ENCODE measurements at regions of chr21 and their contacts with region 1.

Region 1: DNA sequence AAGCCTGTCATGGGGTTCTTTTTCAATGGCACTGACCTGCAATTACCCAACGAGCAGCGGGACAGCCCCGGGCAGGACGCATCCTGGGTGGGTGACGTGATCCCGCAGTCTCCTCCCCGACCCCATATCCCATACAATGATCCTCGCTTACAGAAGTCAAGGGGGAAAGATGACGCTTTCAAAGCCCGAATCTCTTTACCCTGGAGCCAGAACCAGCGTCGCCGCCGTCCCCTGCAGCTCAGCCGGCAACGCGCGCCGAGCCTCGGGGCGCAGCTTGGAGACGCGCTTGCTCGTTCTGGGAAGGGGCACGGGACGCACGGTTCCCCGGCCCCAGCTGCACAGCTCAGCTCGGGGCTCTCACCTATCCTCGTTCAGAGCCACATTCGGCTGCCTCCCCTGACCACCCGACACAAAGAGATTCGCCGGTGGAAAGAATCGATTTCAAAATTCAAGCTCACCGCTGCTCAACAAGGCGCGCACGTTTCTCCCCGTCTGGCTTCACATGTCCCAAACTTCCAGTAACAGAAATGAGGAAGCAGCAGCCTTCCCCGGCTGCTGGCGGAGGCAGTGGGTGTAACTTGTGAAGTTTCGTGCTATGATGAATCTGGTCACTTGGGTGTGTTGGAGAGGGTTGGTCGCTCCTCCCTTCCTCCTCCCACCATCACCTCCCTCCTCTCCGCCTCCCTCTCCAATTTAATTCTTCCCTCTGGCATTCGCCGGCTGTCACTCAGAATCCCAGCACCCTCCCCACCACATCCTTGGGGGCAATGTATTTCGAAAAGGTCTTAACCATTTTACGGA is at the start of gene TIAM1:
- DNase-seq: peak in 9 of 10 donors; percentile 43 to 78 (median 66)
- H3K4me3 ChIP-seq: peak within 1 kb of the TSS; percentile 40 to 82 (median 64)
- H3K27ac ChIP-seq: peak within 1 kb of the TSS in 18 of 59 donors; percentile 7 to 90 (median 35)
- H3K27me3 ChIP-seq: peaks cover 0 to 10% (median 0%) of the 10 kb centered on the region in 45 donors
- CTCF ChIP-seq: peak in 1 of 56 donors; percentile 14
- total RNA-seq, gene TIAM1: 53.4 to 115 (median 79.5) TPM

Region 2: GRCh38 chr21:31107871-31108270 is 236.0 kb before region 1 on chr21:
- intact Hi-C with region 1: loop called in 1 of 2 experiments (anchors 10 kb)
- DNase-seq: no peak
- H3K4me3 ChIP-seq: no peak overlapping the region
- H3K27ac ChIP-seq: peak overlapping the region in 18 of 59 donors; percentile 3 to 74 (median 42)
- H3K27me3 ChIP-seq: no peaks in the 10 kb centered on the region
- CTCF ChIP-seq: no peak

Region 3: DNA sequence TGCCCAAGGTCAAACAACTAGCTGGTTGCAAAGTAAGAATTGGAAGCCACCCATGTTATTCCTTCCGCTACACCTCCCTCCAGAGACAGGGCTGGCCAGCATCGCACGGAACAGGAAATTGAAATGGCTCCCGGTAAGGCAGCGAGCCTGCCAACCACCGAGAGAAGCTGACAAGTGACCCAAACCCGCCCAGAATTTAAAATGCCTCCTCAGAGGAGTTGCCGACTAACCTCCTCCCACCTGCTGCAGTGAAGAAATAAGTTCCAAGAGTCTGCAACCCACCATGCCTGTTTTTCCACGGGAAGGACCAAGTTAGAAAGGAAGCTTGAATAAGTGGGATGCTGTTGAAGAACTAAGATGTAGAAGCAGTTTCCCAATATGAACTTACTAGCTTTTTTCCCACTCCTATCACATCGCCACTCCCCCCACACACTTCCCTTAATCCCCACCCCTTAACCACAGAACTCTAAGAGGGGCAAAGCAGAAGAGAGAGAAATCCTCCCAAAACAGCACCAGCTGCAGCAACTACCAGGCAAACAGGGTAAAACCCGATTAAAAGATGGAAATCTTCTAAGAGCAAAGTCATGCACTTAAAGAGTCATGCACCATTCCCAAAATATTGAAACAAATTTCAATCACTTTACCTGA is 78.4 kb before region 1 on chr21:
- intact Hi-C with region 1: loop called in 1 of 2 experiments (anchors 10 kb)
- DNase-seq: peak in 3 of 10 donors; percentile 46 to 91 (median 53)
- H3K4me3 ChIP-seq: peak overlapping the region in 52 of 59 donors; percentile 4 to 54 (median 36)
- H3K27ac ChIP-seq: peak overlapping the region in 19 of 59 donors; percentile 19 to 81 (median 42)
- H3K27me3 ChIP-seq: no peaks in the 10 kb centered on the region
- CTCF ChIP-seq: no peak

Region 4: DNA sequence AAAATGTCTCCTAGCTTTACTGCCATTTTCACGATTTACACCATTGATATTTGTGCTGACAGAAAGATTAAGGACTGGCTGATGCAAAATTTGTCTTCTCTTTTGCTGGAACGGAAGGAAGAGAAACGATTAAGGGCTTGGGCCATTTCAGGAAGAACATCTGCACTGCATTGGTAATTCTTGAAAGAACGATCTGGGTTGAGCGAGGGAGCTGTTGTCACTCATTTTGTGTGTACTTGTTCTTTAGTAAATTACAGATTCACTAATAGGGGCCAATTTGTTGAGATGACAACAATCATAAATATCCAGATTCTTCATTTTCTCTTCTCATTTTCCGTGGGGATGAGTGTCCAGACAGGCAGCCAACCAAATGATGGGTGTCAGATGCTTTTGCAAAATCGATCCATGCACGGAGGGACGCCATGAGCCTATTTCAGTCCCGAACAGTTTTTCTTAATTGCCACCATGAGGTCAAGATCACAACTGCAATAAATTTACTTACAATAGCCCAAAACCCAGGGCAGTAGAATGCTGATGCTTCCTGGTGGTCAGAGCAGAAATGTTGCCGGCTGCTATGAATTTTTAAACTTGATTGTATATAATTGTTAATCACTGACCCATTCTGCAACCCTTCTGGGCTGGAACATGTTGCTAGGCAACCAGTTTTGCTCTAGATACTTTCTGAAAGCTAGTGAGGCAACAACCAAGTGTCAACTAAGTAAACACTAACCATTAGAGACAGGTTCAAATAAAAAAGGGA is 132.6 kb after region 1 on chr21:
- intact Hi-C with region 1: loop called (anchors 5 to 10 kb)
- DNase-seq: peak in 2 of 10 donors; percentile 20 to 25
- H3K4me3 ChIP-seq: peak overlapping the region in 1 of 59 donors; percentile 10
- H3K27ac ChIP-seq: peak overlapping the region in 52 of 59 donors; percentile 1 to 100 (median 54)
- H3K27me3 ChIP-seq: no peaks in the 10 kb centered on the region
- CTCF ChIP-seq: peak in 31 of 56 donors; percentile 10 to 48 (median 30)

Region 5: DNA sequence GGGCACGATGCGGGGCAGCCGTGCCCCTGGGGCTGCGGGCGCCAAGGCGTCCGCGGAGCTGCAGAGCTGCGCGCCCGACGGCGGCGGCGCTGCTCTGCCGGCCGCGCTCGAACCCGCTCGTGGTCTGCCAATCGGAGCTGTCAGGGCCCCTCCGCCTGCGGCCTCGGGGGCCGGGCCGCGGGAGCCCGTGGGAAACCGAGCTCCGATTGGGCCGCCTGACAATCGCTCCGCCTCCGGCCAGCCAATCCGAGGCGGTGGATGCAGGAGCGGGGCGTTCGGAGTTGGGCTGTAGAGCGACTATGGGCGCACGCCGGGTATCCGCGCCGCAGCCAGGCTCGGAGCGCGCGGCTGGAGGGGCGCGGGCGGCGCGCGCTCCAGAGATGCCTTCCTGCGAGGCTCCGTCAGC is 215.1 kb after region 1 on chr21:
- intact Hi-C with region 1: loop called (anchors 5 kb)
- DNase-seq: peak; percentile 90 to 99 (median 94)
- H3K4me3 ChIP-seq: peak overlapping the region; percentile 60 to 92 (median 79)
- H3K27ac ChIP-seq: peak overlapping the region in 42 of 59 donors; percentile 14 to 90 (median 70)
- H3K27me3 ChIP-seq: peaks cover 0 to 9% (median 0%) of the 10 kb centered on the region in 45 donors
- CTCF ChIP-seq: peak in 50 of 56 donors; percentile 6 to 74 (median 48)